IMR-90 (cell line): ENCODE measurements at regions of chr10 and their contacts with region 1.

Region 1: DNA sequence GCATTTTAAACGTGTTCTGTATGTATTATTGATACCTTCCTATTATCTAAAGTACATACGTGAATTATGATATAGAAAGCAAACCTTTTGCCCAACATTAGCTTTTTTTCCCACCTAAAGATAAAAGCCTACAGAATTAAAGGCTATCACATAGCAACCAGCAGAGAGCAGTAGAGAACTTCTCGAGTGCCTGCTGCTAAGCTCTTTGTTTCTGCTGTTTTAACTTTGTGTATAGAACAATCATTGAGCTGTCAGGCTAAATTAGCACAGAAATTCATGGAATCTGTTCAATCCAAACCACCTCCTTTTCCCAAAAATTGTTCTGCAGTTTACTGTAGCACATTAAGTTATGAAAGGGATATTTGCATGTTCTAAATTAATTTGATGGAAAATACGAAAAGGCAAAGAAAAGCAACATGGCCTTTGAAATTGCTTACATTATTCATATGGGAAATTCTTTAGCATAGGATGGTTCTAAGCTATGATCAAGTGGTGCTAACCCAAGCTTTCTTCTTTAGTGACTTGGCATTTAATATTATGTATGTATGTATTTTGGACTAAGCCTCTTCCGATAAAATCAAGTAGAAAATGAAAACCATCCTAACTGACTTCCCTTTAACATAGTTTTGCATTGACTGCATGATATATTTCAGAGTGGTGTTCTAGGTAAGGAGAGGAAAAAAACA is 1288.5 kb downstream of the GATA3 start:
- DNase-seq: peak; percentile 42
- ATAC-seq: peak; percentile 85
- H3K4me3 ChIP-seq: no peak overlapping the region
- H3K27ac ChIP-seq: no peak overlapping the region
- H3K4me1 ChIP-seq: no peaks in the 10 kb centered on the region
- H3K27me3 ChIP-seq: no peaks in the 10 kb centered on the region
- CTCF ChIP-seq: peak; percentile 71
- POLR2A ChIP-seq: no peak
- RAD21 ChIP-seq: peak; percentile 73

Region 2: DNA sequence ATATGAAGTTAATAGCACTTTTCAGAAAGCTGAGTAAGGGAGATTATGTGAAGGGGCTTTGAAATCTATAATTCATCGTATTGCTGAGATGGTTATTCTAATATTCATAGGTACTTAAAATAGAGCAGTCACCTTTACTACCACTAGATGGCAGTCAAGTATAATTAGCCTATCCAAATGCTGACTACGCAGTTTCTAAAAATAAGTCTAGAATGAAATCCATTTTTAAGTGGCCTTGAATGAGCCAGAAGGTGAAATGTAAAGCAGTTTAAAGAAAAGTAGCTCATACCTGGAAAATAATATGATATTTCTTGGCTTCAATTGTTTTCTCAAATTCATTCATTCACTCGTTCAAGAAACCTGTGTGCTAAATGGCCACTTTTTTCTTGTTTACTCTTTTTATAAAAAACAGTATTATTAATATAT is 11.4 kb before region 1 on chr10:
- CTCF ChIA-PET with region 1: interaction called, 10 read pairs
- POLR2A ChIA-PET with region 1: no interaction called
- dilution Hi-C with region 1: no loop called
- in situ Hi-C with region 1: no loop called
- intact Hi-C with region 1: no loop called
- DNase-seq: peak; percentile 65
- ATAC-seq: peak; percentile 77
- H3K4me3 ChIP-seq: no peak overlapping the region
- H3K27ac ChIP-seq: no peak overlapping the region
- H3K4me1 ChIP-seq: no peaks in the 10 kb centered on the region
- H3K27me3 ChIP-seq: no peaks in the 10 kb centered on the region; the same call in 1 of the 2 replicates
- CTCF ChIP-seq: peak; percentile 92
- POLR2A ChIP-seq: no peak
- RAD21 ChIP-seq: peak; percentile 80

Region 3: DNA sequence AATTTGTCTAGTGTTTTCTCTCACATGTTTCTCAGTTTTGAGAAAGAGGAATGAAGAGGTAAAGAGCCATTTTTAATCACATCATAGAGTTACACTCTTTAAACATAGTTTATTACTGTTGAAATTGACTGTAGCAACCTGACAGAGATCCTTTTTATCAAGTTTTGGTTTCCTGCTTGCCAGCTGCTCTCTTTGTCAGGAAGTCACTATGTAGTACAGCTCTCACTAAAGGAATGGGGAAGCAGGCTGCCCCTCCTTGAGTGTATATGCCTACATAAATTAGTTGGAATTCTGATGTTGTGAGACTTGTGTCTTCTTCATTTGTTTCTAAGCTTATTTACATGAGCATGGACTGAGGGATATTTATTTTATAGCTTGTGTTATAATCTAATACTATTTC is 400.6 kb after region 1 on chr10:
- CTCF ChIA-PET with region 1: no interaction called
- POLR2A ChIA-PET with region 1: no interaction called
- dilution Hi-C with region 1: no loop called
- in situ Hi-C with region 1: no loop called
- intact Hi-C with region 1: loop called (anchors 10 kb)
- DNase-seq: peak; percentile 4
- ATAC-seq: peak; percentile 57
- H3K4me3 ChIP-seq: no peak overlapping the region
- H3K27ac ChIP-seq: no peak overlapping the region
- H3K4me1 ChIP-seq: no peaks in the 10 kb centered on the region; the same call in 1 of the 2 replicates
- H3K27me3 ChIP-seq: no peaks in the 10 kb centered on the region
- CTCF ChIP-seq: no peak
- POLR2A ChIP-seq: no peak
- RAD21 ChIP-seq: no peak

Region 4: GRCh38 chr10:10677479-10677878 is 1334.5 kb after region 1 on chr10:
- CTCF ChIA-PET with region 1: interaction called, 5 read pairs
- POLR2A ChIA-PET with region 1: no interaction called
- dilution Hi-C with region 1: no loop called
- in situ Hi-C with region 1: loop called (anchors 25 kb)
- intact Hi-C with region 1: loop called (anchors 2 kb)
- DNase-seq: peak; percentile 80
- ATAC-seq: peak; percentile 95
- H3K4me3 ChIP-seq: no peak overlapping the region
- H3K27ac ChIP-seq: no peak overlapping the region
- H3K4me1 ChIP-seq: no peaks in the 10 kb centered on the region
- H3K27me3 ChIP-seq: no peaks in the 10 kb centered on the region; the same call in 1 of the 2 replicates
- CTCF ChIP-seq: peak; percentile 66
- POLR2A ChIP-seq: no peak
- RAD21 ChIP-seq: peak; percentile 91

Region 5: DNA sequence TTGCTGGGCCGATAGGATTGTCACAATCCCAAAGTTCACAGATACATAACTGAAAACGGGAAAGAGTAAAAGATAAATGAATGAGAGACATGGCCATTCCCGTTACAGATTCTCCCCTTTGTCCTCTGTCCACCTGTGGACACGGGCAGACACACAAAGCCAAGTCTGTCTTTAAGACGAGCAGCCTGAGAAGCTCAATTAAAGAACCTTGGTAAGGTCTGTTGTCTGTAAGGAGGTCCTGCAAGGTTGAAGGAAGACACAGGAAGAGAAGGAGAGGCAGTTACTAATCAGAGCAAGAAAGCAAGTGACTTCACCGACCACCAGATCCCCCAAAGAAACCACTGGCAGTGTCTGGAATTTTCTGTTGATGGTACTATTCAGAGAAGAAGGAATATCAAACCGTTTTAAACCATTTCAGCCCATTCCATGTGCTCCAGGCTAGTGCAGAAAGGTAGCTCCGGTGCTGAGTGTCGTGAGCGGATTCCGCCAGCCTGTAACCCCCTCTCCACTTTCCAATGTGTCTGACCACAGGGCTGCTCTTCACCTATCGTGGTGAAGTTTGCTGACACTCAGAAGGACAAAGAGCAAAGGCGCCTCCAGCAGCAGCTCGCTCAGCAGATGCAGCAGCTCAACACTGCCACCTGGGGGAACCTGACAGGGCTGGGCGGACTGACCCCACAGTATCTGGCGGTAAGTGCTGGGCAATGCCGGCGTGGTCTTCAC is 1927.3 kb after region 1 on chr10:
- CTCF ChIA-PET with region 1: interaction called, 8 read pairs
- POLR2A ChIA-PET with region 1: no interaction called
- dilution Hi-C with region 1: no loop called
- in situ Hi-C with region 1: loop called (anchors 10 kb)
- intact Hi-C with region 1: loop called (anchors 1 kb)
- DNase-seq: peak; percentile 53
- ATAC-seq: peak; percentile 99
- H3K4me3 ChIP-seq: no peak overlapping the region
- H3K27ac ChIP-seq: no peak overlapping the region
- H3K4me1 ChIP-seq: no peaks in the 10 kb centered on the region
- H3K27me3 ChIP-seq: no peaks in the 10 kb centered on the region; the same call in 1 of the 2 replicates
- CTCF ChIP-seq: peak; percentile 73
- POLR2A ChIP-seq: no peak
- RAD21 ChIP-seq: peak; percentile 83